Caco-2 (cell line): ENCODE measurements at regions of chr20 and their contacts with region 1.

Region 1: GRCh38 chr20:11544029-11544678 is 373.5 kb upstream of the BTBD3 start:
- DNase-seq: peak in 1 of 2 experiments; percentile 73
- H3K4me3 ChIP-seq: no peak overlapping the region
- H3K4me3 Mint-ChIP-seq: no peak overlapping the region
- H3K27ac Mint-ChIP-seq: no peak overlapping the region
- H3K4me1 ChIP-seq: peaks cover 13% of the 10 kb centered on the region
- H3K4me1 Mint-ChIP-seq: no peaks in the 10 kb centered on the region
- H3K27me3 ChIP-seq: no peaks in the 10 kb centered on the region
- H3K27me3 Mint-ChIP-seq: no peaks in the 10 kb centered on the region
- CTCF ChIP-seq: peak; percentile 48 to 73

Region 2: DNA sequence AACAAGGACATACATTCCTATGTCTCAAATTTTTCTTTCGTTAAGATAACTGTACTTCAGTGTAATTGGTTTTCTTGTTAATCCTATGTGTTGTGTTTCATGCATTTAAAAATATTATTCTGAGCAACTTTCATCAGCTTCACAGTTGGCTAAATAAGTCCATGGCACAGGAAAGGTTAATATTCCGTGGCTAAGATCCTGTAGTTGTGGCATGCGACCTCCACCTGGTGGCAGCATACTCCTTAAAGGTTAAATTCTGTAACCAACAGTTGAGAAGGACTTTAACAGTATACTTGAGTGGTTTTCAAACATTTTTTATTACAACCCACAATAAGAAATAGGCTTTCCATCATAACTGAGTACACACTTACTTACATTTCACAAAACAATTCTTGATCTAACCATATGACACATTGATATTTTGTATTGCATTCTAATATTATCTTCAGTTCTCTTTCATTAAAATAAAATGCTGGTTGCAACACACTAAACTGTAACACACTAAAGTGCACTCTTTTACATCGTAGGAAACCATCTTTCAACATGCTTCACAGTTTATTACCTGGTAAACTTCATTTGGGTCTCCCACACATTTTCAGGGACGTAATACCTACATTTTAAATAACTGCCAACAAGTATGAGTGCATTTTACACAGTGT is 990.7 kb before region 1 on chr20:
- CTCF ChIA-PET with region 1: no interaction called
- POLR2A ChIA-PET with region 1: no interaction called
- intact Hi-C with region 1: loop called (anchors 1 kb)
- DNase-seq: peak; percentile 74 to 76
- H3K4me3 ChIP-seq: no peak overlapping the region
- H3K4me3 Mint-ChIP-seq: no peak overlapping the region
- H3K27ac Mint-ChIP-seq: no peak overlapping the region
- H3K4me1 ChIP-seq: peaks cover 31% of the 10 kb centered on the region
- H3K4me1 Mint-ChIP-seq: peaks cover 50% of the 10 kb centered on the region
- H3K27me3 ChIP-seq: no peaks in the 10 kb centered on the region
- H3K27me3 Mint-ChIP-seq: no peaks in the 10 kb centered on the region
- CTCF ChIP-seq: peak; percentile 76 to 85

Region 3: DNA sequence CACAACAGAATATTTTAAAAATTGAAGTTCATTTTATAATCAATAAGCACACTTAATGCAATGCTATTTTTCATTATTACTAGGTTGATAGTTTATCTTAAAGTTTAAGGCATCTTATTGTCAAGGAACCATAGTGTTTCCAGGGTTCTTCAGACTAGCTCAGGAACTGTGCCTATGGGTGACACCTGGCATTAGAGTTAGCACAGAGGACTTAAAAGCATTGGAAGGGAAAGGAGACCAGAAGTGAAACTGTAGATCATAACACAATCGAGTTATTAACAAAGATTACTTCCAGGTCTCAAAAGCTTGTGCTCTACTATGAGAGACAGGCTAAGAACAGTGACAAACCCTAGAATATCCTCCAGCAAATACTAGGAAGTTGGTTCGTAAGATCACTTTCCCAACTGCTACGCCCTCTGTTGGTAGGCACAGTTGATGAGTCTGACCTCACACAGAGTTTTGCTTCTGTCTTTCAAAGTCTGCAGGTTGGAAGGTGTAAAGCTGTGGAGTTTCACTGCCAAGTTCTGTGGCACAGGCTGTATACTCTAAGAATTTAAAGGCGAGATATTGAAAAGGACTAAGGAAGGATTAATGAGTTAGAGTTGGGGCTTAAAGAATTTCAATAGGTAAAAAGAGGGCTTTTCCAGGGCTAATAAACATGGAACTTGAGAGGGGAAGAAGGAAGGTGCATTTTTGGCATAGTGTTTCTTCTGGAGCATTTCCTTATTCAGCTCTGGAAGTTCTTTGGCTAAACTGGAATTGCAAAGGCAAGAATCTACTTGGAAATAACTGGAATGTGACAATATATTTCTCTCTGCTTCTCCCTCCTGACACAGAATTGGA is 339.0 kb before region 1 on chr20:
- CTCF ChIA-PET with region 1: interaction called, 9 read pairs
- POLR2A ChIA-PET with region 1: no interaction called
- intact Hi-C with region 1: loop called (anchors 5 kb)
- DNase-seq: peak; percentile 75 to 76
- H3K4me3 ChIP-seq: no peak overlapping the region
- H3K4me3 Mint-ChIP-seq: no peak overlapping the region
- H3K27ac Mint-ChIP-seq: peak overlapping the region; percentile 10
- H3K4me1 ChIP-seq: peaks cover 38% of the 10 kb centered on the region
- H3K4me1 Mint-ChIP-seq: peaks cover 20% of the 10 kb centered on the region
- H3K27me3 ChIP-seq: no peaks in the 10 kb centered on the region
- H3K27me3 Mint-ChIP-seq: no peaks in the 10 kb centered on the region
- CTCF ChIP-seq: peak; percentile 75 to 94

Region 4: GRCh38 chr20:11296951-11297350 is 247.2 kb before region 1 on chr20:
- CTCF ChIA-PET with region 1: no interaction called
- POLR2A ChIA-PET with region 1: no interaction called
- intact Hi-C with region 1: loop called (anchors 5 kb)
- DNase-seq: no peak
- H3K4me3 ChIP-seq: no peak overlapping the region
- H3K4me3 Mint-ChIP-seq: no peak overlapping the region
- H3K27ac Mint-ChIP-seq: no peak overlapping the region
- H3K4me1 ChIP-seq: no peaks in the 10 kb centered on the region
- H3K4me1 Mint-ChIP-seq: no peaks in the 10 kb centered on the region
- H3K27me3 ChIP-seq: no peaks in the 10 kb centered on the region
- H3K27me3 Mint-ChIP-seq: no peaks in the 10 kb centered on the region
- CTCF ChIP-seq: no peak

Region 5: DNA sequence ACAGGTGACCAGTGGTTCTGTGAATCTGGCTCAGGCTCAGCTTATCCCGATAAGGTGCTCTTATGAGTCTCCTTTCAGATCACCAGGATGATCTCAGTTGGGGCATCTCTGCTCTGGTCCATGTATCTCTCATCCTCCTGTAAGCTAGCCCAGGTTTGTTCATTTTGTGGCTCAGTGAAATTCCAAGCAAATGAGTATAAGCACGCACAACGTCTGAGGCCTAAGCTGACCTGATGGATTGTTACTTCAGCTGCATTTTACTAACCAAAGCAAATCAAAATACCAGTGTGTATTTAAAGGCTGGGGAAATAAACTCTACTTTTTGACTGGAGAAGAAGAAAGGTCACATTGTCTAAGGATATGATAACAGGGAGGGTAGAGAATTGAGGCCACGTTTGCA is 177.5 kb before region 1 on chr20:
- CTCF ChIA-PET with region 1: no interaction called
- POLR2A ChIA-PET with region 1: no interaction called
- intact Hi-C with region 1: no loop called
- DNase-seq: no peak
- H3K4me3 ChIP-seq: no peak overlapping the region
- H3K4me3 Mint-ChIP-seq: no peak overlapping the region
- H3K27ac Mint-ChIP-seq: no peak overlapping the region
- H3K4me1 ChIP-seq: no peaks in the 10 kb centered on the region
- H3K4me1 Mint-ChIP-seq: peaks cover 11% of the 10 kb centered on the region
- H3K27me3 ChIP-seq: no peaks in the 10 kb centered on the region
- H3K27me3 Mint-ChIP-seq: peaks cover 2% of the 10 kb centered on the region
- CTCF ChIP-seq: no peak

Region 6: DNA sequence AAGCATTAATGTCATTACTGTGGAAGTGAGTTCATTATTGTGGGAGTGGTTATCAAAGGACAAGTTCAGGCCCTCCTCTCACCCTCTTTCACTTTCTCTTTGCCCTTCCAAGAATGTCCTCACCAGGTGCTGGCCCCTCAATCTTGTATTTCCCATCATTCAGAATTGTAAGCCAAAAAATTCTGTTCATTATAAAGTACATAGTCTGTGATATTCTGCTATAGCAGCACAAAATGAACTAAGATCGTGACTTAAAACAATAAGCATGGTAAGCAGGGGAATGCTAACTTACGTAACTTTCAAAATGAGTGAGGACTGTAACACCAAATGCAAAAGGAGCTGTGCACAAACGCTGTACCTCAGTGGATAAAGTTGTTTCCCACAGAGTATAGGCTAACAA is 142.2 kb before region 1 on chr20:
- CTCF ChIA-PET with region 1: no interaction called
- POLR2A ChIA-PET with region 1: no interaction called
- intact Hi-C with region 1: no loop called
- DNase-seq: no peak
- H3K4me3 ChIP-seq: no peak overlapping the region
- H3K4me3 Mint-ChIP-seq: no peak overlapping the region
- H3K27ac Mint-ChIP-seq: no peak overlapping the region
- H3K4me1 ChIP-seq: no peaks in the 10 kb centered on the region
- H3K4me1 Mint-ChIP-seq: peaks cover 5% of the 10 kb centered on the region
- H3K27me3 ChIP-seq: no peaks in the 10 kb centered on the region
- H3K27me3 Mint-ChIP-seq: no peaks in the 10 kb centered on the region
- CTCF ChIP-seq: no peak

Region 7: GRCh38 chr20:11454966-11455799 is 89.0 kb before region 1 on chr20:
- CTCF ChIA-PET with region 1: no interaction called
- POLR2A ChIA-PET with region 1: no interaction called
- intact Hi-C with region 1: loop called (anchors 1 kb)
- DNase-seq: peak; percentile 82 to 92
- H3K4me3 ChIP-seq: peak overlapping the region; percentile 23
- H3K4me3 Mint-ChIP-seq: peak overlapping the region; percentile 73
- H3K27ac Mint-ChIP-seq: peak overlapping the region; percentile 92
- H3K4me1 ChIP-seq: peaks cover 69% of the 10 kb centered on the region
- H3K4me1 Mint-ChIP-seq: peaks cover 63% of the 10 kb centered on the region
- H3K27me3 ChIP-seq: no peaks in the 10 kb centered on the region
- H3K27me3 Mint-ChIP-seq: no peaks in the 10 kb centered on the region
- CTCF ChIP-seq: no peak